B cell (primary cell): ENCODE measurements at regions of chr11 and their contacts with region 1.

Region 1: DNA sequence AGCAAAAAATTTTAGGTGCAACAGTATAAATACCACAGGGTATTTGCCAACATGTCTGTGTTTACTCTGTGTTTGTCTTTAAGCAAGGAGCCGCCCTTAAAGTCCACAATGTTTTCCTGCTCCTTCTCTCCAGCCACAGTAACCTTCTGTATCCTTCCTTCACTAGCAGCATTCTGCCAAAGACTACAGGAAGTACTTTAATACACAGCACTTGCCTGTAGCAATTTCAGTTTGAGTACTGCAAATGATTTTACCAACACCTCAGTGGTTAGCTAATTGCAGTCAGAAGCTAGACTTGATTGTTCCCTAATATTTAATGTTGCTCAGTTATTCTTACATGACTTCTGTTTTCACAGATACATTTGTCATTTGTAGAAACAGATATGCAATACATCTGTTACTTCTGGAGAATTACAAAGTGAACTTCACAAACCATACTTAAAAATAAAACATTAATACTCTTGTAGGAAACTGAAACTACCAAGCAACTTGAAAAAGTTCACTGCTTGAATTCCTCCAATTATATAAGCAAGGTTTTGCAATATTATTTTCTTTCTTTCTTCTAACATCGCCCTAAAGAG is 69.1 kb downstream of the FCHSD2 start:
- DNase-seq: peak; percentile 47
- ATAC-seq: peak; percentile 39
- H3K4me3 ChIP-seq: peak overlapping the region in 3 of 5 experiments; percentile 1 to 46 (median 13)
- H3K4me3 Mint-ChIP-seq: peak overlapping the region; percentile 78
- H3K27ac ChIP-seq: peak overlapping the region; percentile 49 to 83
- H3K27ac Mint-ChIP-seq: peak overlapping the region; percentile 79
- H3K4me1 ChIP-seq: peaks cover 37 to 53% of the 10 kb centered on the region in 2 donors
- H3K4me1 Mint-ChIP-seq: peaks cover 60% of the 10 kb centered on the region
- H3K27me3 ChIP-seq: no peaks in the 10 kb centered on the region
- H3K27me3 Mint-ChIP-seq: no peaks in the 10 kb centered on the region
- CTCF ChIP-seq: no peak

Region 2: DNA sequence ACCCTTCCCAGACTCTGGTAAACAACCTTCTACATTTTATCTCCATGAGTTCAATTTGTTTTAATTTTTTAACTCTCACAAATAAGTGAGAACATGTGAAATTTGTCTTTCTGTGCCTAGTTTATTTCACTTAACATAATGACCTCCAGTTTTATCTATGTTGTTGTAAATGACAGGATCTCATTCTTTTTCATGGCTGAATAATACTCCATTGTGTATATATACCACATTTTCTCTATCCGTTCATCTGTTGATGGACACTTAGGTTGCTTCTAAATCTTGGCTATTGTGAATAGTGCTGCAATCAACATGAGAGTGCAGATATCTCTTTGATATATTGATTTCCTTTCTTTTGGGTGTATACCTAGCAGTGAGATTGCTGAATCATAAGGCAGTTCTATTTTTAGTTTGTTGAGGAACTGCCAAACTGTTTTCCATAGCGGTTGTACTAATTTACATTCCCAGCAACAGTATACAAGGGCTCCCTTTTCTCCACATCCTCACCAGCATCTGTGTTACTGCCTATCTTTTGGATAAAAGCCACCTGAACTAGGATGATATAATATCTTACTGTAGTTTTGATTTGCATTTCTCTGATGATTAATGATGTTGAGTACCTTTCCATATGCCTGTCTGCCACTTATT is 164.8 kb before region 1 on chr11:
- CTCF ChIA-PET with region 1: no interaction called
- POLR2A ChIA-PET with region 1: no interaction called
- intact Hi-C with region 1: no loop called
- DNase-seq: no peak
- ATAC-seq: no peak
- H3K4me3 ChIP-seq: no peak overlapping the region
- H3K4me3 Mint-ChIP-seq: no peak overlapping the region
- H3K27ac ChIP-seq: no peak overlapping the region
- H3K27ac Mint-ChIP-seq: peak overlapping the region; percentile 32
- H3K4me1 ChIP-seq: no peaks in the 10 kb centered on the region
- H3K4me1 Mint-ChIP-seq: peaks cover 6% of the 10 kb centered on the region
- H3K27me3 ChIP-seq: no peaks in the 10 kb centered on the region
- H3K27me3 Mint-ChIP-seq: no peaks in the 10 kb centered on the region
- CTCF ChIP-seq: no peak

Region 3: GRCh38 chr11:72951193-72951592 is 121.8 kb before region 1 on chr11:
- CTCF ChIA-PET with region 1: no interaction called
- POLR2A ChIA-PET with region 1: no interaction called
- intact Hi-C with region 1: no loop called
- DNase-seq: no peak
- ATAC-seq: no peak
- H3K4me3 ChIP-seq: peak overlapping the region in 1 of 5 experiments; percentile 37
- H3K4me3 Mint-ChIP-seq: peak overlapping the region; percentile 74
- H3K27ac ChIP-seq: peak overlapping the region; percentile 64 to 82
- H3K27ac Mint-ChIP-seq: peak overlapping the region; percentile 76
- H3K4me1 ChIP-seq: peaks cover 53 to 60% of the 10 kb centered on the region in 2 donors
- H3K4me1 Mint-ChIP-seq: peaks cover 67% of the 10 kb centered on the region
- H3K27me3 ChIP-seq: no peaks in the 10 kb centered on the region
- H3K27me3 Mint-ChIP-seq: no peaks in the 10 kb centered on the region
- CTCF ChIP-seq: no peak

Region 4: DNA sequence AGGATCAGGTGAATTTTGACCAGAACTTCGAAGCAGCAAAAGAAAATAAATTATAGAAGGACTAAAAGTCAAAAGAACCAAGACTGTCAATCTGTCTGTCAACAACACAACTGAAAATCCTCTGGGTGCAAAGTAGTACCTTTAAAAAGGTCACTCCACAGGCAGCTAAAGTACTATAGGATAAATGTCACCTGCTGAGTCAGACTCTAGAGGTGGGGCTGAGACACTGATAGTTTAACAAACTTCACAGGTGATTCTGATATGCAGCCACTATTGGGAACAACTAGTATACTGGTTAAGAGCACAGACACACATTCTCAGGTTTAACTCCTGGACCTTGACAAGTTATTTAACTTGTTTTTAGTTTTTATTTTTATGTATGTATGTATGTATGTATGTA is 38.2 kb before region 1 on chr11:
- CTCF ChIA-PET with region 1: no interaction called
- POLR2A ChIA-PET with region 1: no interaction called
- intact Hi-C with region 1: loop called (anchors 5 kb)
- DNase-seq: no peak
- ATAC-seq: no peak
- H3K4me3 ChIP-seq: no peak overlapping the region
- H3K4me3 Mint-ChIP-seq: peak overlapping the region; percentile 45
- H3K27ac ChIP-seq: peak overlapping the region in 1 of 2 donors; percentile 40
- H3K27ac Mint-ChIP-seq: peak overlapping the region; percentile 81
- H3K4me1 ChIP-seq: peaks cover 11 to 17% of the 10 kb centered on the region in 2 donors
- H3K4me1 Mint-ChIP-seq: peaks cover 55% of the 10 kb centered on the region
- H3K27me3 ChIP-seq: no peaks in the 10 kb centered on the region
- H3K27me3 Mint-ChIP-seq: no peaks in the 10 kb centered on the region
- CTCF ChIP-seq: no peak

Region 5: DNA sequence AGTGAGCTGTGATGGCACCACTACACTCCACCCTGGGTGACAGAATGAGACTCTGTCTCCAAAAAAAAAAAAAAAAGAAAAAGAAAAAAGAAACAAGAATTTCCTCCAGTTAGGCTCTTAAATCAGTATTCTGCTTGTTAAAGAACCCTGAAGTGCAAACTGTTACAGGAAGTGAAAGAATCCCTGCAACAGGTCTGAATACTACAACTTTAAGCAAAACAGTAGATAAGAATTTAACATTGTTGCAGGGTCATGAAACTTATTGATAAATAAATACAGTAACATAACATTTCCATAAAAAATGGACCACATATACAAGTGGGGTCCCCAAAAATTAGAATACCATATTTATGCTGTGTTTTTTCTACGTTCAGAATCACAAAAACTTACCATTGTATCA is 33.4 kb after region 1 on chr11:
- CTCF ChIA-PET with region 1: interaction called, 3 read pairs
- POLR2A ChIA-PET with region 1: no interaction called
- intact Hi-C with region 1: loop called (anchors 5 kb)
- DNase-seq: peak; percentile 34
- ATAC-seq: peak; percentile 47
- H3K4me3 ChIP-seq: no peak overlapping the region
- H3K4me3 Mint-ChIP-seq: no peak overlapping the region
- H3K27ac ChIP-seq: peak overlapping the region in 1 of 2 donors; percentile 72
- H3K27ac Mint-ChIP-seq: peak overlapping the region; percentile 50
- H3K4me1 ChIP-seq: peaks cover 20 to 33% of the 10 kb centered on the region in 2 donors
- H3K4me1 Mint-ChIP-seq: peaks cover 73% of the 10 kb centered on the region
- H3K27me3 ChIP-seq: no peaks in the 10 kb centered on the region
- H3K27me3 Mint-ChIP-seq: no peaks in the 10 kb centered on the region
- CTCF ChIP-seq: no peak

Region 6: GRCh38 chr11:74069147-74070047 is 996.4 kb after region 1 on chr11:
- CTCF ChIA-PET with region 1: no interaction called
- POLR2A ChIA-PET with region 1: no interaction called
- intact Hi-C with region 1: no loop called
- DNase-seq: no peak
- ATAC-seq: no peak
- H3K4me3 ChIP-seq: no peak overlapping the region
- H3K4me3 Mint-ChIP-seq: no peak overlapping the region
- H3K27ac ChIP-seq: no peak overlapping the region
- H3K27ac Mint-ChIP-seq: no peak overlapping the region
- H3K4me1 ChIP-seq: no peaks in the 10 kb centered on the region
- H3K4me1 Mint-ChIP-seq: no peaks in the 10 kb centered on the region
- H3K27me3 ChIP-seq: no peaks in the 10 kb centered on the region
- H3K27me3 Mint-ChIP-seq: no peaks in the 10 kb centered on the region
- CTCF ChIP-seq: no peak